ENCODE measurements at regions of chr11 and their contacts with region 1.

Region 1: GRCh38 chr11:16738193-16738946 is at the start of gene C11orf58:
- DNase-seq: peak; percentile 93 to 98 (median 96)
- H3K4me3 ChIP-seq: peak within 1 kb of the TSS; percentile 72 to 98 (median 88)
- H3K27ac ChIP-seq: peak within 1 kb of the TSS; percentile 80 to 98 (median 93)
- H3K27me3 ChIP-seq: no peaks in the 10 kb centered on the region
- CTCF ChIP-seq: peak in 36 of 56 donors; percentile 5 to 60 (median 28)
- total RNA-seq, gene C11orf58: 69.7 to 160 (median 112) TPM

Region 2: DNA sequence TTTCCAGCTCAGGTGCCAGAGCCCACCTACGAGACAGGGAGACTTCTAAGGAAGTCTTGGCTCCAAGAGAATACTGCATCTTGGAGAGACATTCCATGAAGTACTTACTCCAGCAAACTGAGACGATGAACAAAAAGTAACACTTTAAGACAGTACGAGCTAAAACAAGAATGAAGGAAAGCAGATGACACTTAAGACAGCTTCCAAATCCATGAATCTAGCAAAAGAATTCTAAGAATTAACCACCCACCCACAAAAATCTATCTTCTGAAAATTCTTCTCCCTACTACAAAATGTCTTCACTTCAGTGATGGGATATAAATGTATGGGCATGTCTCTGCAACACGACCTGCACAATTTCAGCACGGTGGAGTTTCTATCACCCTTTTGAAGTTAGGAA is 133.0 kb after region 1 on chr11:
- intact Hi-C with region 1: no loop called
- DNase-seq: no peak
- H3K4me3 ChIP-seq: no peak overlapping the region
- H3K27ac ChIP-seq: no peak overlapping the region
- H3K27me3 ChIP-seq: peaks cover 0 to 3% (median 0%) of the 10 kb centered on the region in 45 donors
- CTCF ChIP-seq: no peak

Region 3: GRCh38 chr11:17077520-17078401 is 339.4 kb after region 1 on chr11 and contains the start of gene RPS13:
- intact Hi-C with region 1: loop called (anchors 2 to 5 kb)
- DNase-seq: peak; percentile 98 to 99 (median 99)
- H3K4me3 ChIP-seq: peak within 1 kb of the TSS; percentile 58 to 100 (median 96)
- H3K27ac ChIP-seq: peak within 1 kb of the TSS; percentile 42 to 96 (median 90)
- H3K27me3 ChIP-seq: no peaks in the 10 kb centered on the region
- CTCF ChIP-seq: peak in 27 of 56 donors; percentile 3 to 55 (median 23)
- total RNA-seq, gene RPS13: 204 to 383 (median 281) TPM

Measured in dorsolateral prefrontal cortex (tissue), 120 donors.